Vagina (tissue), 2 donors: ENCODE measurements at regions of chr17 and their contacts with region 1.

Region 1: GRCh38 chr17:3026856-3027751 is 36.3 kb downstream of the OR1D5 start:
- DNase-seq: no peak
- H3K4me3 ChIP-seq: no peak overlapping the region
- H3K27ac ChIP-seq: no peak overlapping the region
- H3K4me1 ChIP-seq: no peaks in the 10 kb centered on the region
- H3K27me3 ChIP-seq: no peaks in the 10 kb centered on the region
- CTCF ChIP-seq: no peak
- POLR2A ChIP-seq: no peak

Region 2: GRCh38 chr17:2990396-2990795 is 36.7 kb before region 1 on chr17:
- intact Hi-C with region 1: loop called (anchors 1 kb)
- DNase-seq: no peak
- H3K4me3 ChIP-seq: no peak overlapping the region
- H3K27ac ChIP-seq: no peak overlapping the region
- H3K4me1 ChIP-seq: no peaks in the 10 kb centered on the region
- H3K27me3 ChIP-seq: no peaks in the 10 kb centered on the region
- CTCF ChIP-seq: no peak
- POLR2A ChIP-seq: no peak